Activated T-helper 1 cell treated with anti-CD3 and anti-CD28 coated beads, Interleukin-12 subunit alpha, Interleukin-12 subunit beta, Interleukin-2, Interleukin-4 antibody, amounts not matched to agents 30 ng/mL and 10 ng/mL and 1 ng/mL, durations not matched to agents 14 hours and 24 hours and 36 hours (primary cell): ENCODE measurements at regions of chr2 and their contacts with region 1.

Region 1: DNA sequence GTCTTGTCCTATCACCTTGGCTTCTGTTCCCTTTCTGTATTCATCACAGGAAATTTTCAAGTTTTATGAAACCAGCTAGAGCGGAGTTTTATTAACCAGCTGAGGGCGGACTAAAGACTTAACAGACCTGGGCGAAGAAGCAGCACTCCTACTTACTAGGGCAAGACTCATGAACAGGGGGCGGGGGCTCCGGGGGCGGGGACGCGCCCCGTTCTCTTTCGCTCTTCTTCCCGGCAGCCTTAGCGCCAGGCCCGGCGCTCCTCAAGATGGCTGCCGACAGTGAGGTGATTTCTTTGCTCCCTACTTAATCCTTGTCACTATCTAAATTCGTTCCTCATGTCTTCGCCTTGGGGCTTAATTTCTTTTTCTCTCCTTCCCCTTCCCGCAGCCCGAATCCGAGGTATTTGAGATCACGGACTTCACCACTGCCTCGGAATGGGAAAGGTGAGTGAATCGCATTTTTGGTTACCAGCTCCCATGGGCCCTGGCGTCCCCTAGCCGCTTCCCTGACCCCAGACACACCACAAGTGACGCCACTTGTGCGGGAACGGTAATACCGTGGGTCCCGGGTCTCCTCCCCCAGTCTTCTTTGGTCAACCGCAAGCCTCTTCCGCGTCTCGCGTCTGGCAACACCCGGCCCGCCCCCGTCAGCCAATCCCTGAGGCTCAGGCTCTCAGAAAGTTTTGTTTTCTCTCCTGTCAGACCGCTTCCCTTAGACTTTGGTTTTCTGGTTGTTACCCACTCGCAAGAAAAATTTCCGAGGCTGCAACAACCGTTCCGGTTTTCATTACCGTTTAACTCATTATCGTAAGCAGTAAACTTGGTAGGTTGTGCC is at the start of gene RAB3GAP1:
- DNase-seq: peak; percentile 94
- H3K4me3 Mint-ChIP-seq: peak within 1 kb of the TSS; percentile 92
- H3K27ac Mint-ChIP-seq: peak within 1 kb of the TSS; percentile 99
- H3K4me1 Mint-ChIP-seq: peaks cover 54% of the 10 kb centered on the region
- H3K27me3 Mint-ChIP-seq: peaks cover 1% of the 10 kb centered on the region
- total RNA-seq, gene RAB3GAP1: 23.4 and 25.6 TPM in 2 replicates

Region 2: GRCh38 chr2:134253804-134254203 is 798.5 kb before region 1 on chr2 and contains the start of gene MGAT5:
- intact Hi-C with region 1: loop called (anchors 2 kb)
- DNase-seq: no peak
- H3K4me3 Mint-ChIP-seq: no peak within 1 kb of the TSS
- H3K27ac Mint-ChIP-seq: no peak within 1 kb of the TSS
- H3K4me1 Mint-ChIP-seq: peaks cover 63% of the 10 kb centered on the region
- H3K27me3 Mint-ChIP-seq: peaks cover 19% of the 10 kb centered on the region
- total RNA-seq, gene MGAT5: 25.8 and 26.2 TPM in 2 replicates

Region 3: GRCh38 chr2:134973241-134974138 is 78.8 kb before region 1 on chr2:
- intact Hi-C with region 1: loop called (anchors 1 kb)
- DNase-seq: no peak
- H3K4me3 Mint-ChIP-seq: peak overlapping the region; percentile 0
- H3K27ac Mint-ChIP-seq: peak overlapping the region; percentile 54
- H3K4me1 Mint-ChIP-seq: peaks cover 15% of the 10 kb centered on the region
- H3K27me3 Mint-ChIP-seq: peaks cover 15% of the 10 kb centered on the region

Region 4: DNA sequence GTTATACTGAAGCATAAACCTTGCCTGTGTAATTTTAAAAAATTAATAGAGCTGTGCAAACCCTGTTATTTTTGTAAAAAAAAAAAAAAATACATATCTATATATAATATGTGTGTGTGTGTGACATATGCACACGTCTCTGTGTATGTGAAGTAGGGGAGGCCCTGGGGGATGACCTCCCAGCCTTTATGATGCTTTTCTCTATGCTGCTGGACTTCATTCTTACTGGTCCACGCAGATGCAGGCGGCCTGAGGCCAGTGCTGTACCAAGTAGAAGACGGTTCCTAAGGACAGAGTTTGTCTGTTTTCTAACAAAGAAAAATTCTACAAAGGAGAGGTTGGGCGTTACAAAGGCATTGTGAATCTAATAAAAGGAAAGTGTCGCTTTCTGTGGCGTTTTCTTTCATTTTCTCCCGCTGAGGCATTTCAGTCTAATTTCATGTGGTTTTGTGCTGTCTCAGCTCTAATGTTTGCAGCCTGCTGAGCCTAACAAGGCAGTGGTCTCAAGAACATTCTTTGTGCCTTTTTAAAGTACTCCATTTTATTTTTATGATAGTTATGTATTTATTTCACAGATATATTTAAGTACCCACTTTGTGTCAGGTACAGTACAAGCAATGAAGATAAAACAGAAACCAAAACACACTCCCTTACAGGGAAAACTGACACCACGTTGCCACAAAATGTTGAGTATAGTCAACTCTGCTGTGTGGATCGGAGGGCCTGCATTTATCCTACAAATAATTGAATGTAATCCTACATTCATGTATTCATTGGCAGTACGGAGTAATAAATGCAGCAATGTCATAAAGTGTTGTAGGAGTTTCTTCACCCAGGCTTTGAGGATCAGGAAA is 117.9 kb after region 1 on chr2:
- intact Hi-C with region 1: loop called (anchors 5 kb)
- DNase-seq: no peak
- H3K4me3 Mint-ChIP-seq: peak overlapping the region; percentile 73
- H3K27ac Mint-ChIP-seq: no peak overlapping the region
- H3K4me1 Mint-ChIP-seq: peaks cover 8% of the 10 kb centered on the region
- H3K27me3 Mint-ChIP-seq: no peaks in the 10 kb centered on the region

Region 5: DNA sequence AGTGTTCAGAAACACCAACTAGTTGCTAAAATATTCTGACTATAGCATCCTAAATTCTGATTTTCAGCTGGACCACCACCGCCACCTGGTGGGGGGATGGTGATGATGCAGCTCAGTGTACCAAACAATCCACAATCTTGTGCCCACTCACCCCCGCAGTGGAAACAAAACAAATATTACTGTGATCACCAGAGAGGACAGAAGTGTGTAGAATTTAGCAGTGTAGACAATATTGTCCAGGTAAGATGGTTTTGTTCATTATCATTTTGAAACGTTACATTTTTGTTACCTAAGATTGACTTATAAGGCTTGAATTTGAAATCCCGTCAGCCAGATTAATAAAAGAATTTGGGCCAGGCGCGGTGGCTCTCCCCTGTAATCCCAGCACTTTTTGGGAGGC is 657.7 kb after region 1 on chr2:
- intact Hi-C with region 1: loop called (anchors 1 kb)
- DNase-seq: peak; percentile 42
- H3K4me3 Mint-ChIP-seq: no peak overlapping the region
- H3K27ac Mint-ChIP-seq: no peak overlapping the region
- H3K4me1 Mint-ChIP-seq: no peaks in the 10 kb centered on the region
- H3K27me3 Mint-ChIP-seq: no peaks in the 10 kb centered on the region

Region 6: DNA sequence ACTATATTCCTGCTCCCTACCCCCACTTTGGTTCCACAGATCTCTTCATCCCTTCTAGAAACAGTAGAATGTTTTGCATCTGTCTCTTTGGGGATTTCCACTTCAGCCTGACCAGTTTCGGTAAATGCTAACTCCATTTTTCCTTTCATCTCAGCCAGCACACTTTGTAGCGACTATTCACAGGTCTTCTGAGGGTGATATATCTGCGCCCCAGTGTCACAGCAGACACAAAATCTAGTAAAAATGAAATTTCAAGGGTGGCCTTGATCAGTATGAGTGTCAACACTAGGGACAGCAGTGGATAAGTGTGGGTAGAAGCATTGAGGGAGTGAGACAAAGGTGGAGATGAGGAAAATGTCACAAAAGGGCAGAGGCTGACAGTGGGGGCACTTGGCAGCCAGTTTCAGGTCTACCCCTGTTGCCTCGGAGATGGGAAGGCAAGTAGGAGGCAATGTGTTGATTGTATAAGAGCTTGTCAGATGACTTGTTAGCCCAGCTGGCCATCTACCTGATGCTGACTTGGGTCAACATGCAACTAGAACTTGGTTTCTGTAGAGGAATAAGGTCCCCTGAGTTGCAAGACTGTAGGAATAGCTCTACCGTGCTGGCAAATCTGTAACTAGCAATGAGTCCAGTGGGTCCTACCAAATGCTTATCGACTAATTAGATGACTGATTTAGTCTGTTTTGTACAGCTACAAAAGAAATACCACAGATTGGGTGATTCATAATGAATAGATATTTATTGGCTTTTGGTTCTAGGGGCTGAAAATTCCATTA is 1005.0 kb after region 1 on chr2:
- intact Hi-C with region 1: loop called (anchors 2 kb)
- DNase-seq: peak; percentile 65
- H3K4me3 Mint-ChIP-seq: peak overlapping the region; percentile 43
- H3K27ac Mint-ChIP-seq: peak overlapping the region; percentile 90
- H3K4me1 Mint-ChIP-seq: peaks cover 87% of the 10 kb centered on the region
- H3K27me3 Mint-ChIP-seq: no peaks in the 10 kb centered on the region